Activated naive CD4-positive, alpha-beta T cell treated with anti-CD3 and anti-CD28 coated beads for 36 hours (primary cell): ENCODE measurements at regions of chr14 and their contacts with region 1.

Region 1: GRCh38 chr14:63663430-63664341 is 22.0 kb upstream of the WDR89 start:
- DNase-seq: no peak
- H3K4me3 Mint-ChIP-seq: no peak overlapping the region
- H3K27ac Mint-ChIP-seq: no peak overlapping the region
- H3K4me1 Mint-ChIP-seq: no peaks in the 10 kb centered on the region
- H3K27me3 Mint-ChIP-seq: no peaks in the 10 kb centered on the region

Region 2: DNA sequence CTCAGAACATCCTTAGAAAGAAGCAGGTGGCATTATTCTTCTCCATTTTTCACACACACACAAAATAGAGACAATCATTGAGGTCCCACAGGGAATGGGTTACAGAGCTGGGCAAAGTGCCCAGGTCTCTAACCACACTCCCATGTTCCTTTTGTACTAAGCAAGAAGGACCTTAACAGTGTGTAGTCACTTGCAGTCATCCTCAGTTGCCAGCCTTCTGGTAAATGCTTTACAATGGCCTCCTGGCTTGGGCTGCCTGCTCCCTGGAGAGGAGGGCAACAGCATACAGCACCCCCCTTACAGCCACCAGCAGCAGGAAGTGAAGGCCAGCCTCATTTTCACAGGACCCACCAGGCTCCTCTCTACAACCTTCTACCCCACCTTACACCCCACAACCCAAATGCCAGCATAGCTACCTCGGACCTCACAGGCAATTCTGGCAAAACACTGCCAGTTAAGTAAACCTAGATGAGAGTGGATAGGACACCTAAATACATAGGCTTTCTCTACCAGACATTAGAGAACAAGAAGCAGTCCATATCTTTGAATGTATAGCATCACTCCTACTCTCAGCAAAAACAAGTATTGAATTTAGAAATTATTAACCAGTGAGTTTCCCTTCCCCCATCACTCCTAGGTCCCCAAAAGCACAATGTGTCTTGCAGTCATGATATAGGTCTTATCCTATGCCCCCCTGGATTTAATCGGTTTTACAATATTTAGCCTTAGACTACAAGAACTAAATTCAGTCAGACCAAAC is 208.6 kb before region 1 on chr14:
- CTCF ChIA-PET with region 1: no interaction called
- intact Hi-C with region 1: no loop called
- DNase-seq: no peak
- H3K4me3 Mint-ChIP-seq: no peak overlapping the region
- H3K27ac Mint-ChIP-seq: no peak overlapping the region
- H3K4me1 Mint-ChIP-seq: peaks cover 9% of the 10 kb centered on the region
- H3K27me3 Mint-ChIP-seq: no peaks in the 10 kb centered on the region

Region 3: GRCh38 chr14:63650256-63650952 is 13.3 kb before region 1 on chr14:
- CTCF ChIA-PET with region 1: no interaction called
- intact Hi-C with region 1: loop called (anchors 1 kb)
- DNase-seq: peak; percentile 76
- H3K4me3 Mint-ChIP-seq: peak overlapping the region; percentile 34
- H3K27ac Mint-ChIP-seq: peak overlapping the region; percentile 97
- H3K4me1 Mint-ChIP-seq: peaks cover 50% of the 10 kb centered on the region
- H3K27me3 Mint-ChIP-seq: no peaks in the 10 kb centered on the region